Left ventricle myocardium inferior (tissue), 1 donor: ENCODE measurements at regions of chr14 and their contacts with region 1.

Region 1: GRCh38 chr14:56491299-56492285 is 88.0 kb upstream of the TMEM260 start:
- DNase-seq: no peak
- H3K4me3 ChIP-seq: no peak overlapping the region
- H3K27ac ChIP-seq: no peak overlapping the region
- H3K4me1 ChIP-seq: peaks cover 7% of the 10 kb centered on the region
- H3K27me3 ChIP-seq: no peaks in the 10 kb centered on the region
- CTCF ChIP-seq: peak; percentile 77

Region 2: GRCh38 chr14:55446218-55446654 is 1045.4 kb before region 1 on chr14:
- intact Hi-C with region 1: loop called (anchors 10 kb)
- DNase-seq: no peak
- H3K4me3 ChIP-seq: no peak overlapping the region
- H3K27ac ChIP-seq: peak overlapping the region; percentile 28
- H3K4me1 ChIP-seq: peaks cover 24% of the 10 kb centered on the region
- H3K27me3 ChIP-seq: no peaks in the 10 kb centered on the region
- CTCF ChIP-seq: peak; percentile 72

Region 3: GRCh38 chr14:56271970-56272369 is 219.6 kb before region 1 on chr14:
- intact Hi-C with region 1: no loop called
- DNase-seq: no peak
- H3K4me3 ChIP-seq: no peak overlapping the region
- H3K27ac ChIP-seq: no peak overlapping the region
- H3K4me1 ChIP-seq: peaks cover 18% of the 10 kb centered on the region
- H3K27me3 ChIP-seq: no peaks in the 10 kb centered on the region
- CTCF ChIP-seq: no peak

Region 4: DNA sequence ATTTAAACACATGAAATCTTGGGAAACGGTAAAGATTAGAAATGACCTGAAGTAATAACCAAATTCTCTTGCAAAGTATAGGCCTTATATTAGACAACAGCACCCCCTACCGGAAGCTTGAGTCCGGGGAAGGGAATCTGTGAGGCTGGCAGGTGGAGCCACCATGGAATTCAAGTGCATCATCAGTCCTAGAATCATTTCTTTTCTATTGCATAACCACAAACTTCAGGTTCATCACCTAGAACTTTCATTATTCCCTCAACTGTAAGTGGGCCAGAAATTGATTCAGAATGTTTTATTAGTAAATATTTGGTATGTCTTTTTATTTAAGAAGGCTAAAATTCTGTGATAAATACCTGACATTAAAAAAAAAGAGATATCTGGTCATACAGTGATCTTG is 825.7 kb after region 1 on chr14:
- intact Hi-C with region 1: loop called (anchors 5 kb)
- DNase-seq: peak; percentile 27
- H3K4me3 ChIP-seq: no peak overlapping the region
- H3K27ac ChIP-seq: no peak overlapping the region
- H3K4me1 ChIP-seq: no peaks in the 10 kb centered on the region
- H3K27me3 ChIP-seq: peaks cover 48% of the 10 kb centered on the region
- CTCF ChIP-seq: peak; percentile 89